Activated B cell treated with CpG ODN at 0.5 μM for 24 hours (primary cell): ENCODE measurements at regions of chr6 and their contacts with region 1.

Region 1: GRCh38 chr6:41787219-41787917 is at the start of gene TOMM6:
- DNase-seq: peak; percentile 91
- ATAC-seq: peak; percentile 83
- H3K4me3 Mint-ChIP-seq: peak within 1 kb of the TSS; percentile 97
- H3K27ac Mint-ChIP-seq: peak within 1 kb of the TSS; percentile 97
- H3K4me1 Mint-ChIP-seq: peaks cover 28% of the 10 kb centered on the region
- H3K27me3 Mint-ChIP-seq: no peaks in the 10 kb centered on the region
- CTCF ChIP-seq: peak; percentile 66
- total RNA-seq, gene TOMM6: 219 and 252 TPM in 2 replicates

Region 2: DNA sequence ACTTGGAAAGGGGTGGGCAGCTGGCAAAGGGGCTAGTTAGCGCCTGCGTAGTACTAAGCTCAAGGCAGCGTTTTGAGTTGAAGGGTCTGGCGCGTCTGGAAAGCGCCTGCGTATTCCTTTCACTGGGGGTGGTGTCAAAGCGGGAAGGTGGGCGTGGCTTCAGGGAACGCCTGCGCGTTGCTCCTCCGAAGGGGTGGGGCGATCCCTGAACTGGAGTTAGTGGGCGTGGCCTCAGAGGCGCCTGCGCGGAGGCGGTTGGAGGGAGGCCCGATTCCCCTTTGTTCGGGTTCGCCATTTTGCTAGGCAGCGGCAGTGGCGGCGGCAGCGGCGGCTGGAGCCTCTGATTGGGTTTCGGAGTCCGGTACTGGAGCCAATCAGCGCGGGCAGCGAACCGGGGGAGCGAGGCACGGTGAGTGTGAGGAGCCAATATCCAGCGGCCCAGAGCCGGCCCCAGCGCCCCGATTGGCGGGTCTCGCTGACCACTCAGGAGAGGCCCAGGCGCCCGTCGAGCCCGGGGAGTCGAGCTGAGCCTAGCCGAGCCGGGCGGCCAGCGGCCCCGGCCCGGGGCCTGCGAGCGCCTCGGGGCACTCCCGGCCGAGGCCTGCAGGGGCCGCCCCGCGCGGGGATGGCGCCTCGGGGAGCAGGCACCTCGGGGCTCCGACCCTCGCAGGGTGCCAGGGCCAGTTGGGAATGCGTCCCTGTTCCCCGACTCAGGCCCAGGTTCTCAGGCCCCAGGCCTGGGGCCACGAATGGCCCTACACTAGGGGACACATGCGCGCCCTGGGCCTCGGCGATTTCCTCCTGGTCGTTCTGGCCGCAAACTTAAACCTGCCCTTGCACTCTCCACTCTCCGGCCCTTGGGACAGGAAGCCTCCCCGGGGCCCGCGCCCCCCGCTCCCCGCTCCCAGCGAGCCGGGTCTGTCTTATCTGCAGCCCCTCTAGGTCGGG is 714.4 kb before region 1 on chr6 and contains the start of gene NFYA:
- CTCF ChIA-PET with region 1: no interaction called
- POLR2A ChIA-PET with region 1: no interaction called
- intact Hi-C with region 1: loop called (anchors 5 kb)
- DNase-seq: peak; percentile 100
- ATAC-seq: peak; percentile 63
- H3K4me3 Mint-ChIP-seq: peak within 1 kb of the TSS; percentile 96
- H3K27ac Mint-ChIP-seq: peak within 1 kb of the TSS; percentile 98
- H3K4me1 Mint-ChIP-seq: peaks cover 47% of the 10 kb centered on the region
- H3K27me3 Mint-ChIP-seq: no peaks in the 10 kb centered on the region
- CTCF ChIP-seq: no peak
- total RNA-seq, gene NFYA: 33.7 and 35.1 TPM in 2 replicates

Region 3: DNA sequence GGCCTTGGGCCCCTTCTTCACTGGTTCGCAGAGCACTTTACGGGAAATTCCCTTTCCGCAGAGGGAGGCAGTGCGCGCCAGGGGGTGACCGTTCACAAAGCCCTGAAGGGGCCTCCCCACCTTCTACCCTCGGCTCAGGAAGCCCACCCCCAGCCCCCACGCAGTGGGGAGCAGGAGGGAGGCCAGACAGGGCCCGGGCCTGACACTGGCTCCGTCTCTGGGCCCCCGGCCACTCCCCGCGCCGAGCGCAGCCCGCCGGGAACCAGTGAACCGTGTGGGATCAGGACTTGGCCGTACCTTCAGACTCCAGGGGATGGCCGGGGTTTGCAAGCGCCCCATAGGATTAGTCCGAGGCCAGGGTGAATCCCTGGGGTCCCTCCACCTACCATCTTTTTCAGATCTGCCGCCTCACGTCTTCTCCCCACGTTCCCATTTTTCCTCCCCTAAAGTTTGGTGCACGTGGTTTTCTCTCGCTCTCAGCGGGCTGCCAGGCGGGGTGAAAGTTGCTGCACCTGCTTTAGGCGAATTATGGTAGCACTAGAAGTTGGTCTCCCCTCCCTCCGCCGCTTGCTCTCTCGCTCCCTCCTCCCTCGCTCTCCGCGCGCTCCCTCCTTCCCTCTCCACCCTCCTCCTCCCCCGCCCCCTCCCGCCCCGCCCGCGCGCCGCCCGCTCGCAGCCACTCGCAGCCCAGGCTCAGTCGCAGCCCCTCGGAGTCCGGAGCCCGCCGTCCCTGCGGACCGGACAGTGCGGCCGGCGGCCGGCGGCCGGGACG is 241.5 kb before region 1 on chr6 and contains the start of gene FOXP4:
- CTCF ChIA-PET with region 1: no interaction called
- POLR2A ChIA-PET with region 1: no interaction called
- intact Hi-C with region 1: loop called (anchors 5 kb)
- DNase-seq: peak; percentile 76
- ATAC-seq: peak; percentile 77
- H3K4me3 Mint-ChIP-seq: peak within 1 kb of the TSS; percentile 97
- H3K27ac Mint-ChIP-seq: peak within 1 kb of the TSS; percentile 91
- H3K4me1 Mint-ChIP-seq: peaks cover 43% of the 10 kb centered on the region
- H3K27me3 Mint-ChIP-seq: no peaks in the 10 kb centered on the region
- CTCF ChIP-seq: no peak
- total RNA-seq, gene FOXP4: 37.8 and 40.7 TPM in 2 replicates

Region 4: GRCh38 chr6:41859356-41859755 is 72.0 kb after region 1 on chr6:
- CTCF ChIA-PET with region 1: no interaction called
- POLR2A ChIA-PET with region 1: no interaction called
- intact Hi-C with region 1: no loop called
- DNase-seq: no peak
- ATAC-seq: no peak
- H3K4me3 Mint-ChIP-seq: no peak overlapping the region
- H3K27ac Mint-ChIP-seq: no peak overlapping the region
- H3K4me1 Mint-ChIP-seq: no peaks in the 10 kb centered on the region
- H3K27me3 Mint-ChIP-seq: no peaks in the 10 kb centered on the region
- CTCF ChIP-seq: no peak

Region 5: DNA sequence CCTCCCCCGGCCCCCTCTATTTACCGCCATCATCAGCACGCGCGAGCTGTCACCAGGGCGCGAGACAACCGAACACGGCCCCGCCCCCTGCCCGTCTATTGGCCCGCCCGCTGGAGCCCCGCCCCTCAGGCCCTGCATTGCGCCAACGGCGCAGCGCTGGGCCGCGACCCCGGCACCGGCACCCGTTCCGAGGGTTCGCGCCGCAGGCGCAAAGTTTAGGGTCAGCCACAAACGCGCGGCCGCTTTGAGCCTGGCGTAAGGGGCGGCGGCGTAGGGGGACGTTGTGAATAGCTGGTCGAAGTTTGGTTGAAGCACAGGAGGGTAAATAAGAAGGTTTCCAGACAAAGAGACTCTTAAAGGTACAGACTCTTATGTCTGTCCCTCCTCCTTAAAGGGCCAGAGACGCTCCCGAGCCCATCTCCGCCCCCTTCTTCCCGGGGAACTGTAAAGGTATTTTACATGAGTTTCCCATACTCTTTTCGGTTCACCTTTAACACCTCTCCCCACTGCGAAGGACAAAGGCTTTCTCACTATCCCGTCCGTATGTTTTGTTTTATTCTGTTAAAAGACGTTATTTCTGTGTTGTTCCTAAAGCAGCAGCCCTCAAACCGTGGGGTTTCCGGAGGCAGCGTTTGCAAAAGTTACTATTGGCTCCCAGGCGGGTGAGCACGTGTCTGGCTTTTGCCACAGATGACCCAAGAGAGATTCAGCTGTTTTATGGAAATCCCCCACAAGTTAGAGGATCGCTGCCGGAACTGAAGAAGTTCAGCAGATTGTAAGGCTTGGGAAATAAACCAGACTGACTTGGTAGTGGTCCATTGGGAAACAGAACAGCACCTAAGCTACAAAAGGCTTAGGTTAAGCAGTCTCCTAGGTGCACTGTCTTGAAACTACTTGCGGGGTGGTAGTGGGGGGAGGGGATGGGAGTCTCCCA is 108.2 kb after region 1 on chr6 and contains the start of gene USP49:
- CTCF ChIA-PET with region 1: interaction called, 6 read pairs
- POLR2A ChIA-PET with region 1: interaction called, 51 read pairs
- intact Hi-C with region 1: loop called (anchors 1 kb)
- DNase-seq: peak; percentile 90
- ATAC-seq: peak; percentile 92
- H3K4me3 Mint-ChIP-seq: no peak within 1 kb of the TSS
- H3K27ac Mint-ChIP-seq: peak within 1 kb of the TSS; percentile 95
- H3K4me1 Mint-ChIP-seq: peaks cover 14% of the 10 kb centered on the region
- H3K27me3 Mint-ChIP-seq: no peaks in the 10 kb centered on the region
- CTCF ChIP-seq: no peak
- total RNA-seq, gene USP49: 7.7 and 8.0 TPM in 2 replicates

Region 6: DNA sequence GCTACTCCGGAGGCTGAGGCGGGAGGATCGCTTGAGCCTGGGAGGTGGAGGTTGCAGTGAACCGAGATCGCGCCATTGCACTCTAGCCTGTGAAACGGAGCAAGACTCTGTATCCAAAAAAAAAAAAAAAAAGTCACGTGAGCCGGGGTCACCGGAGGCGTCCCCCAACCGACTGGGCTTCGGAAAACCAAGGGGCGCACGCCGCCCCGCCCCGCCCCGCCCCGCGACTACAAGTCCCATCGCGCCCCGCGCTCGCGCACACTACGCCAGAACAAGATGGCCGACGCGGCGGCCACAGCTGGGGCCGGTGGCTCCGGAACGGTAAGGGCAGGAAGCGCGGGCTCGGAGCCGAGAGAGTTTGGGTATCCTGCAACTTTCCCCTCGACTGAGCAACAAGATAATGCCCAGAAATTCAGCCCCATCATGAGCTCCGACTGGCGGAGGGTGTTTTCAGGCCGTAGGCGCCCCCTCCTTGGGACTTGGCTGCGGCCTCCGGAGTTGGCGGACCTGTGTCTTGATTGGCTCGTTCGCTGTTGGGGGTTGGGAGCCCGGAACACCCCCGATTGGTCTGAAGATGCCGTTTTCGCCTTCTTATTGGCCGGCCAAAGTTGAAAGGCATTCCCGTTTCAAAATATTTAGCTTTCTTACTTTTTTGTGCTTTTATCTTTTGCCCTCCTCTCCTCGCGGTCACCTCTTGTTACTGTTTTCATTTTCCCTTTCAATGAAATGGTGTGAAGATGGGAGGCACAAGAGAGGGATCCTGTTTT is 263.1 kb after region 1 on chr6 and contains the start of gene TAF8:
- CTCF ChIA-PET with region 1: interaction called, 51 read pairs
- POLR2A ChIA-PET with region 1: interaction called, 91 read pairs
- intact Hi-C with region 1: loop called (anchors 1 kb)
- DNase-seq: peak; percentile 81
- ATAC-seq: peak; percentile 74
- H3K4me3 Mint-ChIP-seq: peak within 1 kb of the TSS; percentile 96
- H3K27ac Mint-ChIP-seq: peak within 1 kb of the TSS; percentile 99
- H3K4me1 Mint-ChIP-seq: peaks cover 54% of the 10 kb centered on the region
- H3K27me3 Mint-ChIP-seq: no peaks in the 10 kb centered on the region
- CTCF ChIP-seq: no peak
- total RNA-seq, gene TAF8: 47.2 and 55.7 TPM in 2 replicates

Region 7: GRCh38 chr6:42890311-42891198 is 1103.2 kb after region 1 on chr6:
- CTCF ChIA-PET with region 1: no interaction called
- POLR2A ChIA-PET with region 1: no interaction called
- intact Hi-C with region 1: loop called (anchors 10 kb)
- DNase-seq: peak; percentile 76
- ATAC-seq: peak; percentile 97
- H3K4me3 Mint-ChIP-seq: peak overlapping the region; percentile 97
- H3K27ac Mint-ChIP-seq: peak overlapping the region; percentile 93
- H3K4me1 Mint-ChIP-seq: peaks cover 44% of the 10 kb centered on the region
- H3K27me3 Mint-ChIP-seq: no peaks in the 10 kb centered on the region
- CTCF ChIP-seq: no peak